Left cardiac atrium (tissue), 4 donors: ENCODE measurements at regions of chr7 and their contacts with region 1.

Region 1: GRCh38 chr7:140810830-140811556 is 113.7 kb downstream of the BRAF start:
- DNase-seq: peak; percentile 21
- ATAC-seq: peak; percentile 86 to 93

Region 2: GRCh38 chr7:140914083-140914482 is 103.1 kb after region 1 on chr7:
- intact Hi-C with region 1: loop called in 1 of 2 experiments (anchors 10 kb)
- DNase-seq: no peak
- ATAC-seq: no peak

Region 3: GRCh38 chr7:141231018-141231792 is 420.2 kb after region 1 on chr7:
- intact Hi-C with region 1: loop called in 1 of 2 experiments (anchors 10 kb)
- DNase-seq: peak; percentile 34
- ATAC-seq: peak; percentile 59 to 76